CD8-positive, alpha-beta T cell (primary cell): ENCODE measurements at regions of chr1 and their contacts with region 1.

Region 1: GRCh38 chr1:150372580-150372979 is 8.6 kb downstream of the RPRD2 start:
- DNase-seq: no peak
- ATAC-seq: no peak
- H3K4me3 ChIP-seq: no peak overlapping the region
- H3K4me3 Mint-ChIP-seq: peak overlapping the region; percentile 35
- H3K27ac ChIP-seq: no peak overlapping the region
- H3K27ac Mint-ChIP-seq: peak overlapping the region; percentile 10
- H3K4me1 ChIP-seq: peaks cover 58% of the 10 kb centered on the region
- H3K4me1 Mint-ChIP-seq: peaks cover 72% of the 10 kb centered on the region
- H3K27me3 ChIP-seq: no peaks in the 10 kb centered on the region
- H3K27me3 Mint-ChIP-seq: no peaks in the 10 kb centered on the region
- CTCF ChIP-seq: no peak

Region 2: DNA sequence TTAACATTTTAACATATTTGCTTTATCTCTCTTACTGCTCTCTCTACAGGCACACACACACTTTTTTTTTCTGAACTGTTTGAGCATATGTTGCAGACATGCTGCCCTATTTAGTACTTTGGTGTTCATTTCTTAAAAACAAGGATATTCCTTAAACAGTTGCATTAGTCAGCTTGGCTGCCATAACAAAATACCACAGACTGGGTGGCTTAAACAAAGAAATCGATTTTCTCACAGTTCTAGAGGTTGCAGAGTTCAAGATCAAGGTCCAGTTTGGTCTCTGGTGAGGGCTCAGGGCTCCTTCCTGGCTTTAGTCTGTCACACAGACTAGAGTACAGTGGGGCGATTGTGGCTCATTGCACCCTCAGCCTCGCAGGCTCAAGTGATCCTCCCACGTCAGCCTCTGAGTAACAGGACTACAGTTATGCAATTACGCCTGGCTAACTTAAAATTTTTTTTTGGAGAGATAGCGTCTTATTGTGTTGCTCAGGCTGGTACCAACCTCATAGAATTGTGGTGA is 38.1 kb after region 1 on chr1:
- CTCF ChIA-PET with region 1: interaction called, 3 read pairs
- POLR2A ChIA-PET with region 1: no interaction called
- intact Hi-C with region 1: loop called (anchors 5 kb)
- DNase-seq: no peak
- ATAC-seq: no peak
- H3K4me3 ChIP-seq: no peak overlapping the region
- H3K4me3 Mint-ChIP-seq: no peak overlapping the region
- H3K27ac ChIP-seq: no peak overlapping the region
- H3K27ac Mint-ChIP-seq: no peak overlapping the region
- H3K4me1 ChIP-seq: peaks cover 1% of the 10 kb centered on the region
- H3K4me1 Mint-ChIP-seq: peaks cover 64% of the 10 kb centered on the region
- H3K27me3 ChIP-seq: no peaks in the 10 kb centered on the region
- H3K27me3 Mint-ChIP-seq: no peaks in the 10 kb centered on the region
- CTCF ChIP-seq: no peak

Region 3: GRCh38 chr1:150429805-150430204 is 57.2 kb after region 1 on chr1:
- CTCF ChIA-PET with region 1: no interaction called
- POLR2A ChIA-PET with region 1: no interaction called
- intact Hi-C with region 1: loop called in 1 of 2 experiments (anchors 5 kb)
- DNase-seq: peak in 2 of 9 experiments; percentile 18 to 41
- ATAC-seq: no peak
- H3K4me3 ChIP-seq: no peak overlapping the region
- H3K4me3 Mint-ChIP-seq: no peak overlapping the region
- H3K27ac ChIP-seq: no peak overlapping the region
- H3K27ac Mint-ChIP-seq: peak overlapping the region; percentile 1
- H3K4me1 ChIP-seq: no peaks in the 10 kb centered on the region
- H3K4me1 Mint-ChIP-seq: peaks cover 22% of the 10 kb centered on the region
- H3K27me3 ChIP-seq: no peaks in the 10 kb centered on the region
- H3K27me3 Mint-ChIP-seq: no peaks in the 10 kb centered on the region
- CTCF ChIP-seq: no peak

Region 4: DNA sequence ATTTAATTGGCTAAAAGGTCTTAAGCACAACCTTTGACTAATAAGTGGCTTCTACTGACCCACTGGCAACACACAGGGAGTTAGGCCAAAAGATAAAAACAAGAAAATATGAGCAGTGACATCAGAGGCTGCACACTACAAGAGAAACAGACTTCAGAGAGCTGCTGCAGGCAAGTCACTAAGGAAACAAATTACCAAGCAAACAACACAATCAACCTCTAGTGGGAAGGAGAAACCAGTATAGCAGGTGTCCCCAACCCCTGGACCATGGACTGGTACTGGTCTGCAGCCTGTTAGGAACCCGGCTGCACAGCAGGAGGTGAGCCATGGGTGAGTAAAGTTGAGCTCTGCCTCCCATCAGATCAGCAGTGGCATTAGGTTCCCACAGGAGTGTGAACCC is 277.6 kb after region 1 on chr1:
- CTCF ChIA-PET with region 1: no interaction called
- POLR2A ChIA-PET with region 1: no interaction called
- intact Hi-C with region 1: no loop called
- DNase-seq: no peak
- ATAC-seq: no peak
- H3K4me3 ChIP-seq: no peak overlapping the region
- H3K4me3 Mint-ChIP-seq: no peak overlapping the region
- H3K27ac ChIP-seq: no peak overlapping the region
- H3K27ac Mint-ChIP-seq: no peak overlapping the region
- H3K4me1 ChIP-seq: no peaks in the 10 kb centered on the region
- H3K4me1 Mint-ChIP-seq: peaks cover 6% of the 10 kb centered on the region
- H3K27me3 ChIP-seq: no peaks in the 10 kb centered on the region
- H3K27me3 Mint-ChIP-seq: no peaks in the 10 kb centered on the region
- CTCF ChIP-seq: no peak

Region 5: GRCh38 chr1:151032164-151032563 is 659.6 kb after region 1 on chr1:
- CTCF ChIA-PET with region 1: no interaction called
- POLR2A ChIA-PET with region 1: no interaction called
- intact Hi-C with region 1: no loop called
- DNase-seq: no peak
- ATAC-seq: no peak
- H3K4me3 ChIP-seq: no peak overlapping the region
- H3K4me3 Mint-ChIP-seq: no peak overlapping the region
- H3K27ac ChIP-seq: no peak overlapping the region
- H3K27ac Mint-ChIP-seq: no peak overlapping the region
- H3K4me1 ChIP-seq: no peaks in the 10 kb centered on the region
- H3K4me1 Mint-ChIP-seq: peaks cover 6% of the 10 kb centered on the region
- H3K27me3 ChIP-seq: no peaks in the 10 kb centered on the region
- H3K27me3 Mint-ChIP-seq: no peaks in the 10 kb centered on the region
- CTCF ChIP-seq: no peak